Transverse colon (tissue), 4 donors: ENCODE measurements at regions of chr4 and their contacts with region 1.

Region 1: GRCh38 chr4:188892837-188893236 is 753.6 kb downstream of the TRIML1 start:
- DNase-seq: no peak
- H3K4me3 ChIP-seq: no peak overlapping the region
- H3K27ac ChIP-seq: no peak overlapping the region
- H3K4me1 ChIP-seq: no peaks in the 10 kb centered on the region
- H3K27me3 ChIP-seq: no peaks in the 10 kb centered on the region
- CTCF ChIP-seq: no peak
- EP300 ChIP-seq: no peak
- POLR2A ChIP-seq: no peak

Region 2: GRCh38 chr4:188903995-188904394 is 11.2 kb after region 1 on chr4:
- in situ Hi-C with region 1: no loop called
- intact Hi-C with region 1: loop called (anchors 2 kb)
- DNase-seq: no peak
- H3K4me3 ChIP-seq: no peak overlapping the region
- H3K27ac ChIP-seq: no peak overlapping the region
- H3K4me1 ChIP-seq: no peaks in the 10 kb centered on the region
- H3K27me3 ChIP-seq: no peaks in the 10 kb centered on the region
- CTCF ChIP-seq: no peak
- EP300 ChIP-seq: no peak
- POLR2A ChIP-seq: no peak